CD4-positive, alpha-beta T cell (primary cell): ENCODE measurements at regions of chr16 and their contacts with region 1.

Region 1: DNA sequence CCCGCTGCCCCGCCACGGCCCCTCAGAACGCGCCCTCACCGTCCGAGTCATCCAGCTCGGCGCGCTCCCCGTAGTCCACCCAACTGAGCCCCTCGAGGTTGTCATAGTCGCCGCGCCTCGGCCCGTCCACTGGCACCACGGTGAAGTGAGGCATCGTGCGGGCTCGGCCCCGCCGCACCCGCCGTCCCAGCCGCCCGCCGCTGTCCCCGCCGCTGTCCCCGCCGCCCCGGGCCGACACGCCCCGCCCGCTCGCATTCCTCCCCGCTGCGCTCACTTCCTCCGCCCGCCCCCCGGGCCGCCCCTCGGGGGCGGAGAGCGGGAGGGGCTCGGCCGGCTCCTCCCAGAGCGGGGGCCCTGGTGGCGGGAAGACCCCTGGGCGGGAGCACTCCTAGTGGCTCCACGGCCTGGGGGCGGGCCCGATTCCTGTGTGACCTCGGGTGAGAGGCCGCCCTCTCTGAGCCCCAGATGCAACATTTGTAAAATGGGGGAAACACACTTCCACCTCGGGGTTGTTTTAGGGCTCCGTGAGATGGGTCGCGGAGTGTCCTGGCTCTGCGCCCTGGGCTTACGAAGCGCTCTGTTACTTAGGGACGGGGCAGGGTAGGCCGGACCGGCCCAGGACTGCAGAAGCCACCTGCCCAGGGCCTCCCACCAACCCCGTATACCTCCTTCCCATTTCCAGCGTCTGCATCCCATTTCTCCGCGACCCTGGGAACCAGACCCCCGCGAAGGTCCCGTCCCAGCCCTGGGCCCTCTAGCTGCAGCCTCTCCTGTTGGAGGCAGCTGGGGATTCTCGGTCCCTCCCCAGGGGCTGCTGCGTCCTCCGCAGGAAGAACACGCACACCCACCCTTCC is at the start of gene SLC12A4:
- DNase-seq: peak; percentile 61 to 93 (median 79)
- ATAC-seq: peak; percentile 85
- H3K4me3 ChIP-seq: peak within 1 kb of the TSS; percentile 66
- H3K4me3 Mint-ChIP-seq: peak within 1 kb of the TSS; percentile 98
- H3K27ac ChIP-seq: peak within 1 kb of the TSS in 1 of 2 donors; percentile 59
- H3K27ac Mint-ChIP-seq: peak within 1 kb of the TSS; percentile 83
- H3K4me1 ChIP-seq: peaks cover 25% of the 10 kb centered on the region
- H3K4me1 Mint-ChIP-seq: peaks cover 24% of the 10 kb centered on the region
- H3K27me3 ChIP-seq: no peaks in the 10 kb centered on the region
- H3K27me3 Mint-ChIP-seq: no peaks in the 10 kb centered on the region
- CTCF ChIP-seq: no peak
- total RNA-seq, gene SLC12A4: 15.1 to 17.7 TPM

Region 2: DNA sequence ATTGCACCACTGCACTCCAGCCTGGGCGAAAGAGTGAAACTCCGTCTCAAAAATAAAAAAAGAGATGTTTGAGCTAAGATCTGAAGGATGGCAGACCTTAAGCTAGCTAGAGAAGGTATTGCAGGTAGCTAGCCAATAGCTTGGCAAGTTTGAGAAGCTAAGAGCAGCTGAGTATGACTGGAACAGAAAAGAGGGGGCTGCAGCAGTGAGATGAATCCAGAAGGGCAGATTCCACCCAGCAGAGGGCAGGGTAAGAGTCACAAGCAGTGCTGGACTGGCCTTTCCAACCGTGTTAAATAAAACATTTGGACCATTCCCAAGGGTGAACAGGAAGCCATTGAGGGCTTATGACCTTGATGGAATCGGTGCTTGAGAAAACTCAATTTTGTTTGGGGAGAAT is 864.6 kb before region 1 on chr16:
- CTCF ChIA-PET with region 1: no interaction called
- POLR2A ChIA-PET with region 1: no interaction called
- intact Hi-C with region 1: no loop called
- DNase-seq: no peak
- ATAC-seq: no peak
- H3K4me3 ChIP-seq: no peak overlapping the region
- H3K4me3 Mint-ChIP-seq: peak overlapping the region; percentile 1
- H3K27ac ChIP-seq: no peak overlapping the region
- H3K27ac Mint-ChIP-seq: no peak overlapping the region
- H3K4me1 ChIP-seq: peaks cover 3% of the 10 kb centered on the region
- H3K4me1 Mint-ChIP-seq: no peaks in the 10 kb centered on the region
- H3K27me3 ChIP-seq: no peaks in the 10 kb centered on the region
- H3K27me3 Mint-ChIP-seq: no peaks in the 10 kb centered on the region
- CTCF ChIP-seq: no peak

Region 3: GRCh38 chr16:67979955-67980678 is 11.5 kb after region 1 on chr16 and contains the start of gene DPEP3:
- CTCF ChIA-PET with region 1: no interaction called
- POLR2A ChIA-PET with region 1: interaction called, 8 read pairs
- intact Hi-C with region 1: loop called in 1 of 2 experiments (anchors 2 kb)
- DNase-seq: peak in 2 of 14 experiments; percentile 31 to 49
- ATAC-seq: no peak
- H3K4me3 ChIP-seq: no peak within 1 kb of the TSS
- H3K4me3 Mint-ChIP-seq: no peak within 1 kb of the TSS
- H3K27ac ChIP-seq: no peak within 1 kb of the TSS
- H3K27ac Mint-ChIP-seq: no peak within 1 kb of the TSS
- H3K4me1 ChIP-seq: peaks cover 23% of the 10 kb centered on the region
- H3K4me1 Mint-ChIP-seq: peaks cover 23% of the 10 kb centered on the region
- H3K27me3 ChIP-seq: no peaks in the 10 kb centered on the region
- H3K27me3 Mint-ChIP-seq: no peaks in the 10 kb centered on the region
- CTCF ChIP-seq: no peak
- total RNA-seq, gene DPEP3: 0.53 to 0.63 TPM